MCF 10A (cell line): ENCODE measurements at regions of chr3 and their contacts with region 1.

Region 1: DNA sequence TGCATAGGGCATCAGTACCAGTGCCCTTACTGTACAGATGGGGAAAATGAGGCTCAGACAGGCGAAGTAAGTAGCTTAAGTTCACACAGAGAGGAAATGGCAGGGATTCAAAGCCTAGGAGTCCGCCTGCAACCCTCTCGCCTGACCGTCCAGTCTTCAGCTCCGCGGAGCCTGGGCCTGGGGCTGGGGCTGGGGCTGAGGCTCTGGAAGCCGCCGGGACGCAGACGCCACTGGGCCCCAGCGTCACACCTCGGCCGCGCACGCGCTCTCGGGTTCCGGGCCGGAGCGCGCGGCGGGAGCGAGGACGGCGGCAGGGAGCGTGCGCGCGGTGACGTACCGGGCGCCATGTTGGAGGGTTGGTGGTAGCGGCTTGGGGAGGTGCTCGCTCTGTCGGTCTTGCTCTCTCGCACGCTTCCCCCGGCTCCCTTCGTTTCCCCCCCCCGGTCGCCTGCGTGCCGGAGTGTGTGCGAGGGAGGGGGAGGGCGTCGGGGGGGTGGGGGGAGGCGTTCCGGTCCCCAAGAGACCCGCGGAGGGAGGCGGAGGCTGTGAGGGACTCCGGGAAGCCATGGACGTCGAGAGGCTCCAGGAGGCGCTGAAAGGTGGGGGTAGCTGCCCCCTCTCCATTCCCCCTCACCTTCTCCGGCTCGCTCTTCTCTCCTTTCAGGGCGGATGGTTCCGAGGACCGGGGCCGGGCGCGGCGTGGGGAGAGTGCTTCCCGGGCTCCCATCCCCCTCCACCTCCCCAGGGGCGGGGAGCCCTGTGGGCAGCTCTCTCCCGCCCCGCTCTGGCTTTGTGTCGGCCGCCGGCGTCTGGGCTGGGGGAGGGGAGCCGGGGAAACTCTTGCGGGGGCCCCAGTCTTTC is at the start of gene PPP4R2:
- DNase-seq: peak; percentile 87
- H3K4me3 Mint-ChIP-seq: peak within 1 kb of the TSS; percentile 86
- H3K27ac Mint-ChIP-seq: peak within 1 kb of the TSS; percentile 29
- H3K4me1 Mint-ChIP-seq: peaks cover 18% of the 10 kb centered on the region
- H3K27me3 Mint-ChIP-seq: no peaks in the 10 kb centered on the region
- CTCF ChIP-seq: no peak
- total RNA-seq, gene PPP4R2: 86.3 and 105 TPM in 2 replicates

Region 2: GRCh38 chr3:72887705-72888545 is 108.8 kb before region 1 on chr3 and contains the start of gene GXYLT2:
- CTCF ChIA-PET with region 1: no interaction called
- POLR2A ChIA-PET with region 1: interaction called, 10 read pairs
- intact Hi-C with region 1: loop called (anchors 5 kb)
- DNase-seq: peak; percentile 63
- H3K4me3 Mint-ChIP-seq: peak within 1 kb of the TSS; percentile 79
- H3K27ac Mint-ChIP-seq: no peak within 1 kb of the TSS
- H3K4me1 Mint-ChIP-seq: peaks cover 40% of the 10 kb centered on the region
- H3K27me3 Mint-ChIP-seq: no peaks in the 10 kb centered on the region
- CTCF ChIP-seq: no peak
- total RNA-seq, gene GXYLT2: 3.9 and 4.1 TPM in 2 replicates

Region 3: DNA sequence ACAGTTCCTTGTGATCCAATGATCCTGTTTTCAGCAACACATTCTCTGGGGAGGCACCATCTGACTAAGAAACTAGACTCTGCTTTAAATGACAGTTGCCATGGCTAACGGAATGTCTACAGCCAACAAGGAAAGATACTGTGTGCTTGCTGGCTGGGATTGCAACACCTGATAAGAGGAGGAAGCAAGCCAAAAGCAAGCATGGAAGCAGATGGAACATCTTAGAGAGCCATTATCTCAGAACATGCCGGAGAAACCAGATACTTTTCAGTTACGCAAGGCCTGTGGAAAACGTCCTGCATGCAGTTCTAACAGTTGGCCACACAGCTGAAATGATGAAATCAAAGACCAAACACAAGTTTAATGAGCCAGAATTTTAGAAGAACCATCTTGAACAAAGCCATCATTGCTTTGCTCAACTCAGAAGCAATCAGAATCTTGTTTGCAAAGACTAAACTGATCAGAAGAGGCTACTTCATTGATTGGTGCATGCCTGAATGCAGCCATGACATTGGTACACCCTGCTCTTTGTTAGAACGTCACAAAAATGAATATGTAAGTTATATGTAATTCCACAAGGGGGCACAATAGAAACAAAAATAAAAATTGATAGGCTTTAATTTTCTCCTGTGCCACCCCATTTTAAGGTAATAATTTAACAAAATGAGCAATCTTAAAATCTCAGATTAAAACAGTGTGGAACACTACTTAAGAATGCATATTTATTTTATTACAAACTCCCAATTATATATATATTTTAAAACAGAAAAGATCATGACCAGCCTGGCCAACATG is 58.0 kb before region 1 on chr3:
- CTCF ChIA-PET with region 1: interaction called, 6 read pairs
- POLR2A ChIA-PET with region 1: interaction called, 3 read pairs
- intact Hi-C with region 1: loop called (anchors 1 kb)
- DNase-seq: peak; percentile 76
- H3K4me3 Mint-ChIP-seq: peak overlapping the region; percentile 13
- H3K27ac Mint-ChIP-seq: no peak overlapping the region
- H3K4me1 Mint-ChIP-seq: peaks cover 12% of the 10 kb centered on the region
- H3K27me3 Mint-ChIP-seq: no peaks in the 10 kb centered on the region
- CTCF ChIP-seq: peak; percentile 71

Region 4: DNA sequence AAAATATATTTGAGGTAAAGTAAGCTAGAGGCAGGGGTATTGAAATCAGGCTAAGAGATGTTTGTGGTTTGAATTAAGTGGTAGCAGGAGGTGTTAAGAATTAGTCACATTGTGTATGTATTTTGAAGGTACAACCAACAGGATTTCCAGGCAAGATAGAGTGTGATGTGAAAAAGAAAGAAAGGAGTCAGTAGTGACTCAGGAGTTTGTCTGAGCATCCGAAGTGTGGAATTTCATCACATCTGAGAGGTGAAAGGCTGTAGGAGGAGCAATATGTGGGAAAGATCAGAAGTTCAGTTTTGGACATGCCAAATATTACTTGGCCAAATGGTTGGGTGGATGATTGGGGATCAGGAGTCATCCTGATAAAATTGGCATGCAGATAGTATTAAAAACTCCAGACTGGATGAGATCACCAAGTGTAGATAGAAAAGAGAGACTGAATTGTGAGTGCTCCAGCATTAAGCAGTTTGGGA is 32.7 kb after region 1 on chr3:
- CTCF ChIA-PET with region 1: interaction called, 4 read pairs
- POLR2A ChIA-PET with region 1: interaction called, 4 read pairs
- intact Hi-C with region 1: loop called (anchors 2 kb)
- DNase-seq: peak; percentile 91
- H3K4me3 Mint-ChIP-seq: no peak overlapping the region
- H3K27ac Mint-ChIP-seq: peak overlapping the region; percentile 20
- H3K4me1 Mint-ChIP-seq: peaks cover 41% of the 10 kb centered on the region
- H3K27me3 Mint-ChIP-seq: no peaks in the 10 kb centered on the region
- CTCF ChIP-seq: no peak